ENCODE measurements at regions of chr15 and their contacts with region 1.

Region 1: DNA sequence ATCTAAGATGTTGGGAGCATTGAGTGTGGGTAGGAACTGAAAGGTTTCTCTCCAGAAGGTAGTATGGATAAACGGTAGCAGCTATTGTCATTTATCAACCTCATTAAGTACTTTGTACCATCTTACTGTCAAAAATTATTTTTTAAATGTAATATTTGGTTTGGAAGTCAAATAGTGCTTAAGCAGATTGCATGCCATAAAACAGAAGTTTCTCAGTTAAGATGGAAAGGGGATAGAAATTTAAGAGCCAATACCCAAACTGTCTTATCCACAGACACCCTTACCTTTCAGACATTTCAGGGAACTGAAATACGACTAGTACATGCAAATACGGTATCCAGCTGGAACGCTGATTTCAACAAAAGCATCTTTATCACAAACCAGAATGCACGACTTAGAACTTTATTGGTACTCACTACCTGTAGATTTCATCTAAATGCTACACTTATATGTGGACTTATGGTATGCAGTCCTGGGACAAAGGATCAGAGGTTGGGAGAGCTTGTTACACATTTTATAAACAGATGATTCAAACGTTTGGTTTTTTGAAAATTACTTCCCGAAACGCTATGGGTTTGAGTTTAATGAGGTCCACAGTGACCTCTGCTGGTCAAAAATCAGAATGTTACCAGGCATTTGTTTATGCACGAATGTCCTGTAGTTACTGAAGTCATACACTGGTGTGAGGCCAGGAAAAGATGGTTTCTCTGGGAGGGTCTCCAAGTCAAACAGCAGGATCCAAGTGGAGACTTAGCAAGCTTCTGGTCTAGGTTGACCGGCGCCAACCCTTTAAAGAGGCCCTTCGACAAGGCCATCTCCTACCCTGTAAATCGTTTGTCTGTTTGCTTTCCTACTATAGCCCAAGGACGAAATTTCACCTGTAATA is 45.7 kb upstream of the DUT start:
- DNase-seq: peak; percentile 81
- H3K4me3 ChIP-seq: no peak overlapping the region
- H3K27ac ChIP-seq: no peak overlapping the region
- H3K4me1 ChIP-seq: peaks cover 20% of the 10 kb centered on the region
- H3K27me3 ChIP-seq: no peaks in the 10 kb centered on the region
- CTCF ChIP-seq: peak; percentile 78

Region 2: GRCh38 chr15:47885921-47886320 is 399.7 kb before region 1 on chr15:
- CTCF ChIA-PET with region 1: no interaction called
- POLR2A ChIA-PET with region 1: no interaction called
- intact Hi-C with region 1: no loop called
- DNase-seq: peak; percentile 64
- H3K4me3 ChIP-seq: no peak overlapping the region
- H3K27ac ChIP-seq: no peak overlapping the region
- H3K4me1 ChIP-seq: peaks cover 22% of the 10 kb centered on the region
- H3K27me3 ChIP-seq: no peaks in the 10 kb centered on the region
- CTCF ChIP-seq: no peak

Region 3: GRCh38 chr15:48021336-48022086 is 264.1 kb before region 1 on chr15:
- CTCF ChIA-PET with region 1: no interaction called
- POLR2A ChIA-PET with region 1: no interaction called
- intact Hi-C with region 1: loop called (anchors 10 kb)
- DNase-seq: no peak
- H3K4me3 ChIP-seq: no peak overlapping the region
- H3K27ac ChIP-seq: no peak overlapping the region
- H3K4me1 ChIP-seq: no peaks in the 10 kb centered on the region
- H3K27me3 ChIP-seq: peaks cover 2% of the 10 kb centered on the region
- CTCF ChIP-seq: no peak

Region 4: DNA sequence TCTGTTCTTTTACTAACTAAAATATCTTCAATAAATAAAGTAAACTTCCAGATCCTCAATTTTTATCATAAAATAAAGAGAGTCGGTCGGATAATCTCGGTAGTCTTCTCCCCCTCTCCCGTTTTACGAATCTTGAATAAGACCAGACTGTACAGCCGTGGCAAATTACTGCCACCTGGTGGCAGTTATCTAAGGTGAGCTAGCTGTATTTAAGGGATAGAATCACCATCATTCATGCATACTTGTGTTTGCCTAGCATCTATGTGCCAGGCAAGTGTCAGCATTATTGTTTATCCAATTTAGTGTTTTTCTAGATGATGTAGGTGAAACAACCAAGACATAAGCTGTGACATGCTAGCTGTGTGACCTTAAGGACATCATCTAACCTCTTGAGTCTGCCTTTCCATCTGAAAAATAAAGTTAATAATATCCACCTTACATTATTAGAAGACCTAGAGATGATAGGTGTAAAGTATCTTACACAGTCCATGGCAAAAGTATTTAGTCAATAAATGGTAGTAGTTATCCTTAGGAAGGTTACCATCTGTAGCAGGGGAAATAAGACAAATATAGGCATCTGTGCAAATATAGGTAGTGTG is 67.0 kb after region 1 on chr15:
- CTCF ChIA-PET with region 1: no interaction called
- POLR2A ChIA-PET with region 1: no interaction called
- intact Hi-C with region 1: no loop called
- DNase-seq: peak; percentile 83
- H3K4me3 ChIP-seq: no peak overlapping the region
- H3K27ac ChIP-seq: no peak overlapping the region
- H3K4me1 ChIP-seq: no peaks in the 10 kb centered on the region
- H3K27me3 ChIP-seq: no peaks in the 10 kb centered on the region
- CTCF ChIP-seq: peak; percentile 89

Region 5: GRCh38 chr15:49215768-49216739 is 930.5 kb after region 1 on chr15:
- CTCF ChIA-PET with region 1: no interaction called
- POLR2A ChIA-PET with region 1: no interaction called
- intact Hi-C with region 1: no loop called
- DNase-seq: peak; percentile 27
- H3K4me3 ChIP-seq: no peak overlapping the region
- H3K27ac ChIP-seq: no peak overlapping the region
- H3K4me1 ChIP-seq: no peaks in the 10 kb centered on the region
- H3K27me3 ChIP-seq: no peaks in the 10 kb centered on the region
- CTCF ChIP-seq: 0 out of 2 replicates have a peak, but pooled peaks have one; percentile 19

Measured in A673 (cell line).